ENCODE measurements at regions of chr1 and their contacts with region 1.

Region 1: GRCh38 chr1:69898403-69898947 is 306.9 kb downstream of the LRRC40 start:
- DNase-seq: no peak
- H3K4me3 ChIP-seq: no peak overlapping the region
- CTCF ChIP-seq: no peak
- POLR2A ChIP-seq: no peak

Region 2: GRCh38 chr1:68409426-68409825 is 1489.0 kb before region 1 on chr1:
- intact Hi-C with region 1: loop called (anchors 5 kb)
- DNase-seq: no peak
- H3K4me3 ChIP-seq: no peak overlapping the region
- CTCF ChIP-seq: no peak
- POLR2A ChIP-seq: no peak

Region 3: GRCh38 chr1:70025846-70026245 is 127.4 kb after region 1 on chr1:
- intact Hi-C with region 1: no loop called
- DNase-seq: no peak
- H3K4me3 ChIP-seq: no peak overlapping the region
- CTCF ChIP-seq: no peak
- POLR2A ChIP-seq: no peak

Measured in lower leg skin (tissue), 4 donors.